ENCODE measurements at regions of chr15 and their contacts with region 1.

Region 1: DNA sequence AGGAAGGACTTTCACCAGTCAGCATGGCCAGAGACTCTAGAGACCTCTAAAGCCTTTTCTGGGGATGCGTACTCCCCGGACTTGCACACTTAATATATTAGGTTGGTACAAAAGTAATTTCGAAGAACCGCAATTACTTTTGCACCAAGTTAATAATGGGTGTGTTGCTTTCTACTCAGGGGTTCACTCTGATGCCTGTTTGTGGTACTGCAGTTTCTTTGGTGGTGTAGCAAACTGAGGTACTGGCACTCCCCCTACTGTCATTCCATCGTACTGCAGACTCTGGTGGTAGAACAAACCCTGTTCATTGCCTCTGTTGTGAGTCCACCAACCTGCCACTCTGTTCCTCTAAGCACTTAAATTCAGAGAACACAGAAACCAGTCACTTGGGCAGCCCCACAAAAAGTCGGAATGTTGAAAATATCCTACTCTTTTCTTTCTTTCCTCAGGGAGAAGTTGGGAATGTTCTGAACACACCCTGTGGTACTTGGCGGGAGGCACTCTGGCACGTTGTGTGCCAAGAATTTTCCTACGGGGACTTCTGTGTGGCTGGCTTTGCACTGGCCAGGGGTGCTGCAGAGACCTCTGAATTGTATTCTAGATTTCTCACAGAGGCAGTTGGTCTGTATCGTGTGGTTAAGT is 46.3 kb downstream of the GABRG3 start:
- DNase-seq: peak; percentile 77
- ATAC-seq: peak; percentile 86

Region 2: GRCh38 chr15:27601239-27601960 is 584.1 kb after region 1 on chr15:
- intact Hi-C with region 1: no loop called
- DNase-seq: no peak
- ATAC-seq: no peak

Region 3: GRCh38 chr15:28098766-28099554 is 1081.7 kb after region 1 on chr15 and contains the start of gene OCA2:
- intact Hi-C with region 1: loop called (anchors 10 kb)
- DNase-seq: peak; percentile 73
- ATAC-seq: peak; percentile 58
- total RNA-seq, gene OCA2: 0.98 TPM